ENCODE measurements at regions of chr3 and their contacts with region 1.

Region 1: DNA sequence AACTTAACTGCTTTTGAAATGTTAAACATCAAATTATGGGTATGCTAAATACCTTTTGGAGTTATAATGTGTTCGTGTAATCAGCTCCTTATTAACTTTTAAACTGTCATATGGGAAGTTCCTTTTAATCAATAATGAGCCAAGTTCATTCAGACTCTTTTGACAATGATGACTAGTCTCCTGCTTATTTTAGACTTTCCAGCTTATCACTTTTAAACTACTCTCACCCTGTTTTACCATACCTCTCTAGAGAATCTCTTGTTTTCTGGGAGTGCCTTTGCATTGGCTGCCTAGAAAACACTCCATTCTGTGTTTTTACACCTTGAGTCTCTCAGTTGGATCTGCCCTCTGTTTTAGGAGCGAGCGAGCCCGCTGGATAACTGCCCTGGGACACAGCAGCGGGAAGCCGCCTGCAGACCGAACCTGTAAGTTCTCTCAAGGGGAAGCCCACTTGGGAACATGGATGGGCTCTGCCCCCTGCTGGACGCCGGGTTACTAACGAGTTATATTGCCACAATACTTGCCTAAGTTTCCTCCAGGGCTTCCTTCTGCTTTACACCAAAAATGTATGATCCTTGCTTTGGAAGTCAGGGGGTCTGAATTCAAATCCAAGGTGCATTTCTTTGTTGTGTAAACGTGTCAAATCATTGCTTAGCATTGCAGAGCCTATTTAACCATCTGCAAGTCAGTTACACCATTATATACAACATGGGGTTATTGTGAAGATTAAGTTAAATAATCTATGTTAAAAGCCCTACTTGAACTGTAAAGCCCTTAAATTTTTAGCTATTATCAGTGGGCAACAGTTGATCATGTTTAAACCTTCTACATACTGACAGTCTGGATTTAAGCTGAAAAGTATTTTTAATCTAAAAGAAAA is 71.3 kb downstream of the DHX36 start:
- DNase-seq: peak; percentile 87 to 91 (median 88)
- ATAC-seq: peak; percentile 82 to 94 (median 93)
- H3K4me3 ChIP-seq: peak overlapping the region in 6 of 12 donors; percentile 11 to 40 (median 18)
- H3K27ac ChIP-seq: no peak overlapping the region
- H3K4me1 ChIP-seq: peaks cover 0 to 8% (median 4%) of the 10 kb centered on the region in 12 donors
- H3K27me3 ChIP-seq: no peaks in the 10 kb centered on the region
- CTCF ChIP-seq: peak; percentile 81 to 95 (median 88)
- POLR2A ChIP-seq: no peak

Region 2: DNA sequence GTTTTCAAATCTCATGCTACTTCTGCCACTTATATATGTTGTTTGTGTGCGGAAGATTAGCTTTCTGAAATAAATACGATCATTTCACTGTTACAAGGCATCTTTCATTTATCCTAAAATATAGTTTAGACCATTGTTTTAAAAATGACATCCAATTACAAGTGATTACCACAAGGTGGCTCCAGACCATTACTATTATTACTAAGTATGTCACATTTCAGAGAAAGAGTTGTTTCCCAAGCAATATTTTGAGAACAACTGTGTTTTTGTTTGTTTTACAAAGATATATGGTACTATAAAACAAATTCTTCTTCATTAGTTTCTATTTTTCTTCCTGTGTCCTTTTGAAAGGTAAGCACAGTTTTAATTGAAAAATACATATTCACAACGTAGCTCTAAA is 1227.0 kb before region 1 on chr3:
- intact Hi-C with region 1: loop called in 7 of 10 experiments (anchors 2 to 10 kb)
- DNase-seq: no peak
- ATAC-seq: no peak
- H3K4me3 ChIP-seq: no peak overlapping the region
- H3K27ac ChIP-seq: no peak overlapping the region
- H3K4me1 ChIP-seq: peaks cover 0 to 15% (median 7%) of the 10 kb centered on the region in 12 donors
- H3K27me3 ChIP-seq: peaks cover 0 to 5% (median 0%) of the 10 kb centered on the region in 9 donors
- CTCF ChIP-seq: peak; percentile 52 to 82 (median 66)
- POLR2A ChIP-seq: no peak

Region 3: DNA sequence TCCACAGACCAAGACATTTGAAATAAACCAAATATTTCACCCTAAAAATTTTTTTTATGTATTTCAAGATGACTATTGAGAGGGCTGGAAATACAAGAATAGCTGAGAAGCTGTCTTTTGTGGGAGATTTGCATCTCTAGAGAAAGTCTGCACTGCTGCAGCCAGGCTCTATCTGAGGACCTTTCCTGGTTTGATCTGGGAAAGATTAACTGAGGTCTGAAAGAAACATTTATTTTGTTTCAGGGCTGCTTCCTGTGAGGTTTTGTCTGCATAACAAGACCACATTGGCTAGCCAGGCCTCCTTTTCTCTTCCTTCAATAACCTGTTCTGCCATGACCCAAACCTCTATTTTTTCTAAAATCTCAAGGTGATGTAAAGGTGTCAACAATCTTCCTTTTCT is 249.3 kb before region 1 on chr3:
- intact Hi-C with region 1: loop called in 4 of 10 experiments (anchors 5 to 10 kb)
- DNase-seq: no peak
- ATAC-seq: no peak
- H3K4me3 ChIP-seq: no peak overlapping the region
- H3K27ac ChIP-seq: no peak overlapping the region
- H3K4me1 ChIP-seq: no peaks in the 10 kb centered on the region
- H3K27me3 ChIP-seq: no peaks in the 10 kb centered on the region
- CTCF ChIP-seq: no peak
- POLR2A ChIP-seq: no peak

Region 4: GRCh38 chr3:154095832-154096421 is 157.1 kb before region 1 on chr3:
- intact Hi-C with region 1: loop called (anchors 1 to 5 kb)
- DNase-seq: no peak
- ATAC-seq: no peak
- H3K4me3 ChIP-seq: no peak overlapping the region
- H3K27ac ChIP-seq: no peak overlapping the region
- H3K4me1 ChIP-seq: no peaks in the 10 kb centered on the region
- H3K27me3 ChIP-seq: peaks cover 0 to 6% (median 0%) of the 10 kb centered on the region in 9 donors
- CTCF ChIP-seq: peak in 9 of 12 donors; percentile 6 to 63 (median 50)
- POLR2A ChIP-seq: no peak

Region 5: GRCh38 chr3:154120961-154121700 is 131.9 kb before region 1 on chr3 and contains the start of gene ARHGEF26:
- intact Hi-C with region 1: loop called in 6 of 10 experiments (anchors 5 to 10 kb)
- DNase-seq: peak; percentile 71 to 91 (median 85)
- ATAC-seq: peak; percentile 82 to 95 (median 94)
- H3K4me3 ChIP-seq: peak within 1 kb of the TSS; percentile 52 to 90 (median 76)
- H3K27ac ChIP-seq: peak within 1 kb of the TSS in 9 of 12 donors; percentile 35 to 86 (median 54)
- H3K4me1 ChIP-seq: peaks cover 0 to 25% (median 5%) of the 10 kb centered on the region in 12 donors
- H3K27me3 ChIP-seq: peaks cover 0 to 39% (median 6%) of the 10 kb centered on the region in 9 donors
- CTCF ChIP-seq: no peak
- POLR2A ChIP-seq: no peak
- total RNA-seq, gene ARHGEF26: 0.68 to 2.3 (median 1.3) TPM

Region 6: GRCh38 chr3:154656486-154656885 is 403.5 kb after region 1 on chr3:
- intact Hi-C with region 1: no loop called
- DNase-seq: no peak
- ATAC-seq: no peak
- H3K4me3 ChIP-seq: no peak overlapping the region
- H3K27ac ChIP-seq: no peak overlapping the region
- H3K4me1 ChIP-seq: no peaks in the 10 kb centered on the region
- H3K27me3 ChIP-seq: no peaks in the 10 kb centered on the region
- CTCF ChIP-seq: no peak
- POLR2A ChIP-seq: no peak

Region 7: DNA sequence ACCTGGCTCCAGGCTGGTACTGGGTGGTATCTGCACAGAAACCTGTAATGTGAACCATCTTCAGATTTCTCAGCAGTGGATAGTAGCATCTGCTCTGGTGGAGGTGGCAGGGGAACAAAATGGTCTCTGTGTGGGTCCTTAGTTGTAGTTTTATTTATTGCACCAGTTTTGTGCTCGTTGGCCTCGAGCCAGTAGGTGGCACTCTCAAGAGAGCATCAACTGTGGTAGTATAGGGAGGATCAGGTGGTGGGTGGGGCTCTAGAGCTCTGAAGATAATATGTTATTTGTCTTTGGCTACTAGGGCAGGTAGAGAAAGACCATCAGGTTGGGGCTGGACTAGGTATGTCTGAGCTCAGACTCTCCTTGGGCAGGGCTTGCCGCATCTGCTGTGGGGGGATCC is 431.0 kb after region 1 on chr3:
- intact Hi-C with region 1: no loop called
- DNase-seq: no peak
- ATAC-seq: no peak
- H3K4me3 ChIP-seq: no peak overlapping the region
- H3K27ac ChIP-seq: no peak overlapping the region
- H3K4me1 ChIP-seq: no peaks in the 10 kb centered on the region
- H3K27me3 ChIP-seq: no peaks in the 10 kb centered on the region
- CTCF ChIP-seq: no peak
- POLR2A ChIP-seq: no peak